ENCODE measurements at regions of chr20 and their contacts with region 1.

Region 1: DNA sequence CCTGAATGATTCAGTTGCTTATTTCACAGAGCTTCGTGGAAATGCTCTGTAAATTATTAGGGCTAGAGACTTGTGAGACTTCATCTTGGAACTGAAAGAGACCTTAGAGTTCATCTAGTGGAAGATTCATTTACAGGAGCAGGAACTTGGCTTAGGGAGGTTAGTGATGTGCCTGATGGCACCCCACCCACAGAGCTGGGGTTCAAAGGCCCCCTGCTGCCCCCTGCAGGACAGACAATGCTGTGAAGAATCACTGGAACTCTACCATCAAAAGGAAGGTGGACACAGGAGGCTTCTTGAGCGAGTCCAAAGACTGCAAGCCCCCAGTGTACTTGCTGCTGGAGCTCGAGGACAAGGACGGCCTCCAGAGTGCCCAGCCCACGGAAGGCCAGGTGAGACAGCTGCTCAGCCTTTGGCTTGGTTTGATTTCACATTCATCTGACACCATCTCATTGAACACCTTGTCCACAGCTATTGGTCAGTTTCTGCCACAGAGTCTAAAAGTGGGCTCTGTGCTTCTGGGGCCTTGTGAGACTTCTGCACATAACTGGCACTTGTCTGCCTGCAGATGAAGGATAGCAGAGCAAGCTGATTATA is 25.1 kb downstream of the MYBL2 start:
- DNase-seq: peak in 4 of 10 donors; percentile 43 to 53 (median 48)
- H3K4me3 ChIP-seq: no peak overlapping the region
- H3K27ac ChIP-seq: no peak overlapping the region
- H3K27me3 ChIP-seq: no peaks in the 10 kb centered on the region
- CTCF ChIP-seq: peak in 54 of 56 donors; percentile 16 to 67 (median 49)

Region 2: GRCh38 chr20:43068482-43068881 is 623.5 kb before region 1 on chr20:
- intact Hi-C with region 1: no loop called
- DNase-seq: no peak
- H3K4me3 ChIP-seq: no peak overlapping the region
- H3K27ac ChIP-seq: no peak overlapping the region
- H3K27me3 ChIP-seq: no peaks in the 10 kb centered on the region
- CTCF ChIP-seq: peak in 29 of 56 donors; percentile 10 to 64 (median 29)

Region 3: GRCh38 chr20:43448748-43449535 is 243.1 kb before region 1 on chr20:
- intact Hi-C with region 1: loop called in 1 of 2 experiments (anchors 2 kb)
- DNase-seq: peak in 5 of 10 donors; percentile 10 to 51 (median 47)
- H3K4me3 ChIP-seq: peak overlapping the region in 1 of 59 donors; percentile 7
- H3K27ac ChIP-seq: peak overlapping the region in 23 of 59 donors; percentile 2 to 77 (median 46)
- H3K27me3 ChIP-seq: peaks cover 0 to 22% (median 0%) of the 10 kb centered on the region in 45 donors
- CTCF ChIP-seq: peak; percentile 26 to 80 (median 65)